GM10248 (cell line): ENCODE measurements at regions of chr2 and their contacts with region 1.

Region 1: GRCh38 chr2:219119422-219120043 is 41.1 kb downstream of the NHEJ1 start:
- DNase-seq: peak; percentile 65
- CTCF ChIP-seq: peak; percentile 78

Region 2: GRCh38 chr2:218979846-218980734 is 139.4 kb before region 1 on chr2:
- CTCF ChIA-PET with region 1: interaction called, 19 read pairs
- POLR2A ChIA-PET with region 1: no interaction called
- DNase-seq: peak; percentile 86
- CTCF ChIP-seq: peak; percentile 98

Region 3: GRCh38 chr2:219073413-219074129 is 46.0 kb before region 1 on chr2:
- CTCF ChIA-PET with region 1: interaction called, 208 read pairs
- POLR2A ChIA-PET with region 1: no interaction called
- DNase-seq: peak; percentile 67
- CTCF ChIP-seq: peak; percentile 55

Region 4: DNA sequence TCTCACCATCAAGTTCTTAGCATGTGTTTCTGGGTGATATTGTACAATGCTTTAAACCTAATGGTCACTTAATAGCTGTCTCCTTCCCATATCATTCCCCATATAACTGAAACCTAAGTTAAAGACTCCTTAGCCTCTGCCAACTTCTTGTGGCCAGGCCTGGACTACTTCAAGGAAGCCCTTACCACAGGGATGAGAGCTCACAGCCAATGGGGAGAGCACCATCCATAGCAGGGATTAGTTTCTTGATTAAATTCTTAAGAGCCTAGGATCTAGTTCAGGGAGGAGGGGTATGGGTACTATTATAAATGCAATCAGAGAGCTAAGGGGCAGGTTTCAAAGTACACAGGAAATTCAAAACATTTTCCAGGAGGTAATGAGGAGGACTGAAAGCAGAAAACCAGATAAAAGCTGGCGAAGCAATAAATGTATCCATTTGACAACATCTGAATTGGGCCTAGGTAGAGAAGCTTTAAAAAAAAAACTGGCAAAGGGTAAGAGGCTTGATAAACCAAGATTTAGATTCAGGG is 24.1 kb before region 1 on chr2:
- CTCF ChIA-PET with region 1: interaction called, 11 read pairs
- POLR2A ChIA-PET with region 1: no interaction called
- DNase-seq: no peak
- CTCF ChIP-seq: no peak

Region 5: GRCh38 chr2:219142329-219142728 is 22.8 kb after region 1 on chr2:
- CTCF ChIA-PET with region 1: interaction called, 15 read pairs
- POLR2A ChIA-PET with region 1: no interaction called
- DNase-seq: no peak
- CTCF ChIP-seq: no peak

Region 6: DNA sequence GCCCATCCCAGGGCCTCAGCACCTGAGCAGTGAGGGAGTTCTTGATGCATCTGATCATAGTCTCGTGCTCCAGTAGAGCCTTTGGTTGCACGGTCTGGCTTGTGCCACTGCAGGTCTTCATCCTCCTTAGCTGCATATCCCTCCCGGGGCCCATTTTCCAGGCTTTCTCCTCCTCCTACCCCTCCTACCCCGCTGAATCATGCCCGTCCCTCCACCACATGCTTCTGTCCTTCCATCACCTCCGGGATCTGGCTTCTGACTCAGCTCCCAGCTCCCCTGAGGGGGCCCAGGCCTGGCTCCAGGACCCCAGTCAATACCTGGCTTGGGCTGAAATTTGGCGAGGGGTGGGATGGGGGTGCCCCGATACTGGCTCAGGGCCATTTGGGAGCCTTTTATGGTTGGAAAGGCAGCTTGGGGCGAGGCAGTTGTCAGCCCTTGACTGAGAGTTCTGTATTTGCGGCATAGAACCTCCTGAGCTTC is 333.3 kb after region 1 on chr2:
- CTCF ChIA-PET with region 1: no interaction called
- POLR2A ChIA-PET with region 1: no interaction called
- DNase-seq: no peak
- CTCF ChIP-seq: no peak